Posterior vena cava (tissue), 2 donors: ENCODE measurements at regions of chr4 and their contacts with region 1.

Region 1: GRCh38 chr4:96431094-96431493 is 591.2 kb downstream of the PDHA2 start:
- DNase-seq: no peak

Region 2: DNA sequence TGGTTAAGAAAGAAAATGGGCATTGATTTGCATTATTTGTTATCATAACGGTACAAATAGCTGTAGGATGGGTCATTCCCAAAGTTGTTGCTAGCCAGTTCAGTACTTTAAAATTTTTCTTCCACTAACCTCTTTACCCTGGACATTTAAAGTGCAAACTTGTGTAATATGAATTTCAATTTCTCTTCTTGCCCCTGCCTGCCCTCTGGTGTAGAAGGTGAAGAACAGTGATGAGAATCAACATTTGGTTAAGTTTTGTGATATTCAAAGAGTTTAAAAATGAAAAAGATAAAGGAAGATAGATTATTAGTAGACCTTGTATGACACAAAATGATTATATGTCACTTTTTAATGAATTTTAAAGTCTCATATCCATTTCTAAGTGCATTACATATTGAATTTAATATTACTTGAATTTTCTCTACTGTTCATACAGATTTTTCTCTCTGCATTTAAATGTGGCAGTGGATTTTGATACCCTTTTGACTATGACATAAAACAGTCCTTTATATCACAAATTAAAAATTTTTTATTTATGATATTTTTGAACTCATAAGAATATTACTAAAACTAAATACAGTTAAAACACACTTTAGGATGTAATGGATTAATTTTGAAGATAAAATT is 1335.6 kb before region 1 on chr4:
- intact Hi-C with region 1: no loop called
- DNase-seq: no peak

Region 3: DNA sequence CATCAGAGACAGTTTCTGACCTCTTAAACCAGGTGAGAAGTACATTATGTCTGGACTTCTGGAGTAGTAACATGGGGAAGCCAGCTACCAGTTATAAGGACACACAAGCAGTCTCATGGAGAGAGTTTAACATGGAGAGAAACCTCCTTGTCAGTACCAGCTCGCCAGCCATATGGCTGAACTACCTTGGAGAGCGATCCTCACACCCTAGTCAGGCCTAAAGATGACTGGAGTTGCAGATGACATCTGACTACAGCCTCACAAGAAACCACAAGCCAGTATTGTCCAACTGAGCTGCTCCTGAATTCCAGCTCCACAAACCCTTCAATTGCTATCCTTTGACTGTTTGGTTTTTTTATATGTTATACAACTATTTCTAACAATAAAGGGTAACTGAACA is 541.4 kb before region 1 on chr4:
- intact Hi-C with region 1: loop called in 1 of 2 experiments (anchors 5 kb)
- DNase-seq: no peak